Activated B cell treated with CpG ODN at 0.5 μM for 24 hours (primary cell): ENCODE measurements at regions of chr12 and their contacts with region 1.

Region 1: GRCh38 chr12:27014085-27014858 is at the start of gene TM7SF3:
- DNase-seq: peak; percentile 96
- ATAC-seq: peak; percentile 92
- H3K4me3 Mint-ChIP-seq: peak within 1 kb of the TSS; percentile 91
- H3K27ac Mint-ChIP-seq: peak within 1 kb of the TSS; percentile 94
- H3K4me1 Mint-ChIP-seq: peaks cover 49% of the 10 kb centered on the region
- H3K27me3 Mint-ChIP-seq: no peaks in the 10 kb centered on the region
- CTCF ChIP-seq: peak; percentile 33
- total RNA-seq, gene TM7SF3: 20.7 and 30.5 TPM in 2 replicates

Region 2: DNA sequence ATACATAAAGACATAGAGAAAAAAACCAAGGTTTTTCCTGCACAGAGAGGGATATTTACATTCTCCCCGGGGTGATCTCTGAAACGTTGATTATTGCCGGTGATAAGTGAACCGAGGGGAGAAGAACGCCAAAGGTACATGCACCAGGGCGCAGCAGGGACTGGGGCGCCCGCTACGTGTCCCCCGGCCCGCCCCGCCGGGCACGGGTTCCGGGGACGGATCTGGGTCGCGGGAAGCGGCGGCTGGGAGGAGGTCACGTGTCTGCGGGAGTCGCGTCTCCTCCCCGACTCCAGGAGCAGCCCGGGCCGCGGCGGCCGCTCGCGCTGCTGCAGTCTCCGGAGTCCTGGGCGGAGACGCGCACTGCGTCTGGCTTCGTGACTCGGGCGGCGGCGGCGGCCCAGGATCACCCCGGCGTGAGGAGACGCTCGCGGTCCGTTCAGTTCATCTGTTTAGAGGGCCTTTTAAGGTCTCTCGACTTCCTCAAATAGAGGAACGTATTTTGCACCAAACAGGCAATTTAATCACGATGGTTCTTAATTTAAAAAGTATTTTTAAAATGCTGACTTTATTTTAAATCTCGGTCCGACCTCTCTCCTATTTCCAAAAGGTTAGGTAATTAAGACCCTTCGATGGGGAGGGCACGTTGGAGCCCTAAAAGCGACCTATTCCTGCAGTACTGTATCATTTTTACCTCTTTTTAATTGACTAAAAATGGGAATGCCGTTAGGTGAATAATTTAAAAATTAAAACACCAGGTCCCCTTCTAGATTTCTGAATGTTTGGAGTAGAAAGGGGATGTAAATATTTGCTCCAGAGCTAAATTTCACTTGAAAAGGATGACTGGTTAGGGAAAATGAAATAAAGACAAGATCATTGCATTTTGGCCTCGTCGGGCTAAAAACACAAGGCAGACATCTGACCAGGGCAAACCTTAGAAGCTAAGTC is 887.7 kb before region 1 on chr12:
- CTCF ChIA-PET with region 1: no interaction called
- POLR2A ChIA-PET with region 1: no interaction called
- intact Hi-C with region 1: loop called (anchors 5 kb)
- DNase-seq: peak; percentile 71
- ATAC-seq: peak; percentile 45
- H3K4me3 Mint-ChIP-seq: peak overlapping the region; percentile 96
- H3K27ac Mint-ChIP-seq: peak overlapping the region; percentile 96
- H3K4me1 Mint-ChIP-seq: peaks cover 63% of the 10 kb centered on the region
- H3K27me3 Mint-ChIP-seq: no peaks in the 10 kb centered on the region
- CTCF ChIP-seq: no peak

Region 3: GRCh38 chr12:26853303-26854030 is 160.8 kb before region 1 on chr12:
- CTCF ChIA-PET with region 1: interaction called, 4 read pairs
- POLR2A ChIA-PET with region 1: no interaction called
- intact Hi-C with region 1: loop called (anchors 1 kb)
- DNase-seq: peak; percentile 46
- ATAC-seq: peak; percentile 97
- H3K4me3 Mint-ChIP-seq: no peak overlapping the region
- H3K27ac Mint-ChIP-seq: peak overlapping the region; percentile 38
- H3K4me1 Mint-ChIP-seq: no peaks in the 10 kb centered on the region
- H3K27me3 Mint-ChIP-seq: no peaks in the 10 kb centered on the region
- CTCF ChIP-seq: no peak

Region 4: GRCh38 chr12:26971963-26972362 is 42.3 kb before region 1 on chr12:
- CTCF ChIA-PET with region 1: interaction called, 4 read pairs
- POLR2A ChIA-PET with region 1: interaction called, 4 read pairs
- intact Hi-C with region 1: loop called (anchors 2 kb)
- DNase-seq: no peak
- ATAC-seq: peak; percentile 97
- H3K4me3 Mint-ChIP-seq: no peak overlapping the region
- H3K27ac Mint-ChIP-seq: peak overlapping the region; percentile 30
- H3K4me1 Mint-ChIP-seq: peaks cover 26% of the 10 kb centered on the region
- H3K27me3 Mint-ChIP-seq: no peaks in the 10 kb centered on the region
- CTCF ChIP-seq: no peak

Region 5: DNA sequence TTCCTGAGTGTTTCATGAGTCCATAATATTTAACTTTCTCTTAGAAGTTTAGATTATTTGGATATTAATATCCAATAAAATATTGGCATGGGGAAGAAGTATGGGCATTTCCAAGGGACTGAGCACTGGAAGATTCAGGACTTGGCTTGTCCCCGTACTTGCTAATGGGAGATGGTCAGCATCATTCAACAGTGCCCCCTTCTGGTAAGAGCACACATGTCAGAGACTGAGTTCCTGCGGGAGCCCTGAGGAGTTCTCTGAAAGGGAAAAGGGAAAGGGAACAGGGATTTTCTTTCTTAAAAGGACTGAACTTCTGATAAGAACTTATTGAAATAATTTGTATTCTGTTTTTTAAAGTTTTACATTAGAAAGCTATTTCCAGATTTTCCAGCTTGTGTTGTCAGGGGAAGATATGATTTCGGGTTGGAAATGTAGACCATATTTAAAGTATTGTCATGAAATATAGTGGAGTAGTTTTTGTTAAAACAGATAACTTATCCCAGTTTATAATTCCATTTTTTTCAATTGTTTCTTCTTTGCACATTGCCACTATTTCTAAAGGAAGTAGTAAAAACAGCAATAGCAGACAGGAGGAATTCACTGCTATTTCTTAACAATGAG is 127.9 kb after region 1 on chr12:
- CTCF ChIA-PET with region 1: interaction called, 14 read pairs
- POLR2A ChIA-PET with region 1: no interaction called
- intact Hi-C with region 1: loop called (anchors 1 kb)
- DNase-seq: no peak
- ATAC-seq: peak; percentile 76
- H3K4me3 Mint-ChIP-seq: no peak overlapping the region
- H3K27ac Mint-ChIP-seq: no peak overlapping the region
- H3K4me1 Mint-ChIP-seq: peaks cover 12% of the 10 kb centered on the region
- H3K27me3 Mint-ChIP-seq: no peaks in the 10 kb centered on the region
- CTCF ChIP-seq: peak; percentile 43

Region 6: GRCh38 chr12:27523642-27524493 is 509.6 kb after region 1 on chr12 and contains the start of gene PPFIBP1:
- CTCF ChIA-PET with region 1: no interaction called
- POLR2A ChIA-PET with region 1: no interaction called
- intact Hi-C with region 1: loop called (anchors 10 kb)
- DNase-seq: peak; percentile 81
- ATAC-seq: peak; percentile 98
- H3K4me3 Mint-ChIP-seq: peak within 1 kb of the TSS; percentile 96
- H3K27ac Mint-ChIP-seq: peak within 1 kb of the TSS; percentile 93
- H3K4me1 Mint-ChIP-seq: peaks cover 23% of the 10 kb centered on the region
- H3K27me3 Mint-ChIP-seq: peaks cover 3% of the 10 kb centered on the region
- CTCF ChIP-seq: no peak
- total RNA-seq, gene PPFIBP1: 7.2 and 8.1 TPM in 2 replicates